Activated CD4-positive, alpha-beta memory T cell treated with anti-CD3 and anti-CD28 coated beads, Interleukin-2, amount 10 ng/mL, durations not matched to agents 7 days and 5 days (primary cell): ENCODE measurements at regions of chr9 and their contacts with region 1.

Region 1: DNA sequence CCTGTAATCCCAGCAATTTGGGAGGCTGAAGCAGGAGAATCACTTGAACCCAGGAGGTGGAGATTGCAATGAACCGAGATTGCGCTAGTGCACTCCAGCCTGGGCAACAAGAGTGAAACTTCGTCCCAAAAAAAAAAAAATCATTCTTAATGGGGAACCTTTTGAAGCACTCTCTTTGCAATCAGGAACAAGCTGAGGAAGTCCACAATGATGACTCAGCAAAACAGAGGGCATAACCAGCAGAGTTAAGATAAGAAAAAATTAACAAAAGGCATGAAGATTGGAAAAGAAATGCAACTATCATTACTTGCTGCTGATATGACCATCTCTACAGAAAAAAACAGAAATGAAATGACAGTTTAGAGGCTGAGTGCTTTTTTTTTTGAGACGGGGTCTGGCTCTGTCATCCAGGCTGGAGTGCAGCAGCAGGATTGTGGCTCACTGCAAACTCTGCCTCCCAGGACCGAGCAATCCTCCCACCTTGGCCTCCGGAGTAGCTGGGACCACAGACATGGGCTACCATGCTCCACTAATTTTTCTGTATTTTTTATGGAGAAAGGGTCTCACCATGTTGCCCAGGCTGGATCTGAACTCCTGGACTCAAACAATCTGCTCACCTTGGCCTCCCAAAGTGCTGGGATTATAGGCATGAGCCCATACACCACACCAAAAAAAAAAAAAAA is 88.0 kb downstream of the FNBP1 start:
- DNase-seq: no peak
- H3K4me3 Mint-ChIP-seq: no peak overlapping the region
- H3K27ac Mint-ChIP-seq: peak overlapping the region; percentile 24
- H3K4me1 Mint-ChIP-seq: peaks cover 56% of the 10 kb centered on the region
- H3K27me3 Mint-ChIP-seq: no peaks in the 10 kb centered on the region

Region 2: GRCh38 chr9:129610473-129611301 is 344.3 kb before region 1 on chr9:
- CTCF ChIA-PET with region 1: no interaction called
- POLR2A ChIA-PET with region 1: no interaction called
- DNase-seq: peak; percentile 74
- H3K4me3 Mint-ChIP-seq: peak overlapping the region; percentile 64
- H3K27ac Mint-ChIP-seq: peak overlapping the region; percentile 40
- H3K4me1 Mint-ChIP-seq: peaks cover 42% of the 10 kb centered on the region
- H3K27me3 Mint-ChIP-seq: no peaks in the 10 kb centered on the region

Region 3: DNA sequence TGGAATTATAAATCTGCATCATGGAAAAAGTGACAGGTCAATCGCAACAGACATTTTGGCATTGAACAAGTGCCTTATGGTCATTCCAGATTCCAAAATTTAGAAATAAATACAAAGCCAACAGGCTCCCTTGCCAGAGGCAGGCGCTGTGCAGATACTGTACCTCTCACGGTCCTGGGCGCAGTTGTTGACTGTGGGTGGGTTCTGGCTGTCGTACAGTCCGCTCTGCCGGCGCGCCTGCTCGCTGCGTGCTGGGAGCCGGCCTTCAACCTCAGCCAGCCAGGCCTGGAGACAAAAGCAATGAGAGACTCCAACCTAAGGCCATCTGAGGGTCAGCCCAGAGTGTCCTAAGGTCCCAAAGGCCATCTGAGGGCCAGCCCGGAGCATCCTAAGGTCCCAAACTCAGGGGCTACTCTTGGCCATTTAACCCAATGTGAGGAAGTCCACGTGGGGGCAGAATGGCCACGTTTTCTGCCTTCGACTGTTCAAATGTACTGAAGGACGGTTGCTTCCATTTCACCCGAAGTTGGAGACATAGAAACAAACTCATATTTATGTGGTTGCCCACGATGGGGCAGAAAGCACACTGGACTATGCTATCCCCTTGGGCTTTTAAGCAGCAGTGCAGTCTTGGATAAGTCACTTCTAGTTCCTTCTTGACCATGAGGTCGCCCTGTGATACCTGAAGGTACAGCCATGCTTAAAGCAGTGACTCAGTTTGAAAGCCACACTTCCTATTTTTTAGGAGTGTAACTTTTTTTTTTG is 54.6 kb before region 1 on chr9:
- CTCF ChIA-PET with region 1: no interaction called
- POLR2A ChIA-PET with region 1: no interaction called
- DNase-seq: no peak
- H3K4me3 Mint-ChIP-seq: no peak overlapping the region
- H3K27ac Mint-ChIP-seq: no peak overlapping the region
- H3K4me1 Mint-ChIP-seq: peaks cover 72% of the 10 kb centered on the region
- H3K27me3 Mint-ChIP-seq: no peaks in the 10 kb centered on the region

Region 4: DNA sequence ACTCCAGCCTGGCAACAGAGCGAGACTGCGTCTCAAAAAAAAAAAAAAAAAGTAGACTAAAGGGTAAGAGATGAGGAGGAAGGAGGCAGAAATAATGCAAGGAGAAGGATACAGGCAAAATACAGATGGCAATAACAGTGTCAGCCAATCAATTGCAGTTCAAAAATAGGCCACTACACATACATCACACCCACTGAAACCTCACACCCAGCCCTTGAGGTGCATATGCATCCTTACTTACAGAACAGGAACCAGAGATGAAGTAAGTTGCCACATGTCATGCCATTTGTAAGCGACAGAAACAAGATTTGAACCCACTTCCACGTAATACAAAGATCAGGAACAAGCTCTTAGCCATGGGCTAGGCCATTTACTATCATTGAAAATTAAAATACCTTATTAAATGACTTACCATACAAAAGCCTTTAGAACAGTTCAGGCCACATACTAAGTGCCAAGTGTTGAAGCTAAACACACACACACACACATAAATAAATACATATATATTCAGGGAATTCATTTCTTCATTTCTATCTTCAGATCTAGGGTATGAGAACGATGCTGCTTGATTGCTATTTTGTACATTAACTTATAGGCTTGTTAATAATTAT is 10.4 kb before region 1 on chr9:
- CTCF ChIA-PET with region 1: interaction called, 9 read pairs
- POLR2A ChIA-PET with region 1: interaction called, 16 read pairs
- DNase-seq: peak; percentile 76
- H3K4me3 Mint-ChIP-seq: peak overlapping the region; percentile 1
- H3K27ac Mint-ChIP-seq: peak overlapping the region; percentile 80
- H3K4me1 Mint-ChIP-seq: peaks cover 49% of the 10 kb centered on the region
- H3K27me3 Mint-ChIP-seq: no peaks in the 10 kb centered on the region